CD14-positive monocyte (primary cell): ENCODE measurements at regions of chr17 and their contacts with region 1.

Region 1: DNA sequence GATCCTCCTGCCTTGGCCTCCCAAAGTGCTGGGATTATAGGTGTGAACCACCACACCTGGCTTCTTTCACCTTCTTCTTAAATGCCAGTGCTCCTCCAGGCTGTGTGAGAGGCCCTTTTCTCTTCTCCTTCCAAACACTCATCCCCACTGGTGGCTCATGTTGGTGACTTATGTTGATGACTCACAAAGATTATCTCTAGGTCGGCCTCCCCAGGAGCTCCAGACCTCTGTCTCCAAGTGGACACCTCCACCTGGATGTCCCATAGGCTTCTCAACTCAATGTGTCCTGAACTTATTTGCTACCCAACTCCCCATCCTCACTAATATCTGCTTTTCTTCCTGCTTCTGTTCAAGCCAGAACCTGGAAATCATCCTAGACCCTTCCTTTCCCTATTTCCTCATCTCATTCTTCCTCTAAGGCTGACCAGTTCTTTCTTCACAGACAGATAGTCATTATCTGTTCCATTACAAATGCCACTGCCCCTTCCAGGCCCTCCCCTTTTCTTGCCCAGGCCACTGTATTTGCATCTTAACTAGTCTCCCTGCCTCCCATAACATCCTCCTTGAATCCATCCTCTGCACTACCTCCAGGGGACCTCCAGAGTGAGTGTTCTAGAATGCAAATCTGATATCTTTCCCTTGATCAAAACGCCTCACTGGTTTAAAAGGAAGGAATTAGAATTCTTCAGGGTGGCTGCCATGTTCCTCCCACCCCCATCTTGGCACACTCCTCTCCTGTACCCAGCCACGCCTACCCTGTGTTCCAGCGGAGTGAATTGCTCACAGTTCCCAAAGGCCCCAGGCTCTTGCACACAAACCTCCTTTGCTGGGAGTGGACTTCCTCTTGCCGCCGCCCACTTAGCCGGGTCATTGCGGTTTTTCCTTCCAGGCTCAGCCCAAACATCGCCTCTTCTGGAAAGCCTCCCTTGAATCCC is 34.8 kb upstream of the FBXO47 start:
- DNase-seq: peak; percentile 76 to 84 (median 82)
- H3K4me3 ChIP-seq: peak overlapping the region in 1 of 3 experiments; percentile 61
- H3K4me3 Mint-ChIP-seq: peak overlapping the region; percentile 71 to 83
- H3K27ac ChIP-seq: peak overlapping the region; percentile 83 to 91
- H3K27ac Mint-ChIP-seq: peak overlapping the region; percentile 97 to 100 (median 99)
- H3K4me1 ChIP-seq: peaks cover 27 to 32% of the 10 kb centered on the region in 2 donors
- H3K4me1 Mint-ChIP-seq: peaks cover 34% of the 10 kb centered on the region
- H3K27me3 ChIP-seq: no peaks in the 10 kb centered on the region
- H3K27me3 Mint-ChIP-seq: peaks cover 3 to 10% (median 3%) of the 10 kb centered on the region in 3 donors
- CTCF ChIP-seq: no peak

Region 2: GRCh38 chr17:38853292-38854219 is 148.4 kb before region 1 on chr17 and contains the start of gene RPL23:
- intact Hi-C with region 1: no loop called
- DNase-seq: peak; percentile 98
- H3K4me3 ChIP-seq: peak within 1 kb of the TSS; percentile 87 to 95 (median 90)
- H3K4me3 Mint-ChIP-seq: peak within 1 kb of the TSS; percentile 91 to 96
- H3K27ac ChIP-seq: peak within 1 kb of the TSS; percentile 90 to 94
- H3K27ac Mint-ChIP-seq: peak within 1 kb of the TSS; percentile 98 to 99 (median 99)
- H3K4me1 ChIP-seq: peaks cover 42 to 51% of the 10 kb centered on the region in 2 donors
- H3K4me1 Mint-ChIP-seq: peaks cover 46% of the 10 kb centered on the region
- H3K27me3 ChIP-seq: no peaks in the 10 kb centered on the region
- H3K27me3 Mint-ChIP-seq: peaks cover 0 to 4% (median 2%) of the 10 kb centered on the region in 3 donors
- CTCF ChIP-seq: no peak
- polyA plus RNA-seq, gene RPL23: 561 to 1,701 (median 618) TPM

Region 3: DNA sequence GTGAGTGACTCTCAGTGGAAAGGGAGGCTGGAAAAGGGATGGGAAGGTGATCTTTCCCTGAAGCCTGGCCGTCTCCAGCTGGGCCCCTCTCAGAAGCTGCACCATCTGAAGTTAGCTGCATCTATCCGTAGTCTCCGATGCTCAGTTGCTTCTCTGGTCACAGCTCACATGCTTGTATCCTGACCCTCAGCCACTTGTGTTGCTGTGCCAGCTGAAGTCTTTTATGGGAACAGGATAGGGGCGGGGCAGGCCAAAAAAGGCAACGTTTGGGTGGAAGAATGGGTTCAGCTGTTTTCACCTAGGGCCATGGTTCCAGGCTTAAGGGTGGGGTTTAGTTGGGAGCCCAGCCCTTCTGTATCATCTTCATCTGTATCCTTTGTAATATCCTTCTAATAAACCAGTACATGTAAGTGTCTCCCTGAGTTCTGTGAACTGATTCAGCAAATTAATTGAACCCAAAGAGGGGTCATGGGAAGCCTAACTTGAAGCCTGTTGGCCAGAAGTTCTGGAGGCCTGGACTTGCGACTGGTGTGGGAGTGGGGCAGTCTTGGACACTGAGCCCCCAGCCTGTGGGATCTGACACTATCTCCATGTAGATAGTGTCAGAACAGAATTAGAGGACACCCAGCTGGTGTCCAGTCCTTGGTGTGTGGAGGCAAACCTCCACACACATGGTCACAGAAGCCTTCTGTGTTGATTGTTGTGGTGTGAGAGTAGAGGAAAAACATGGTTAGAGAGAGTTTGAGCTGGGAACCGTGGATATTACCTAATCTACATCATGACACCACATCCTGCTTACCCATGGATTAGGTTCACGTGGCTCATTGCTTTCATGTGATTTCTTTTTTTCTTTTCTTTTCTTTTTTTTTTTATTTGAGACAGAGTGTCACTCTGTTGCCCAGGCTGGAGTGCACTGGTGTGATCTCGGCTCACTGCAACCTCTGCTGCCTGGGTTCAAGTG is 14.5 kb after region 1 on chr17:
- intact Hi-C with region 1: loop called in 1 of 2 experiments (anchors 2 kb)
- DNase-seq: peak; percentile 67 to 72 (median 71)
- H3K4me3 ChIP-seq: no peak overlapping the region
- H3K4me3 Mint-ChIP-seq: peak overlapping the region in 1 of 2 donors; percentile 51
- H3K27ac ChIP-seq: peak overlapping the region; percentile 82 to 92
- H3K27ac Mint-ChIP-seq: peak overlapping the region; percentile 85 to 96 (median 94)
- H3K4me1 ChIP-seq: peaks cover 51 to 56% of the 10 kb centered on the region in 2 donors
- H3K4me1 Mint-ChIP-seq: peaks cover 48% of the 10 kb centered on the region
- H3K27me3 ChIP-seq: no peaks in the 10 kb centered on the region
- H3K27me3 Mint-ChIP-seq: peaks cover 0 to 7% (median 4%) of the 10 kb centered on the region in 3 donors
- CTCF ChIP-seq: no peak